Heart right ventricle (tissue), 16 donors: ENCODE measurements at regions of chr5 and their contacts with region 1.

Region 1: DNA sequence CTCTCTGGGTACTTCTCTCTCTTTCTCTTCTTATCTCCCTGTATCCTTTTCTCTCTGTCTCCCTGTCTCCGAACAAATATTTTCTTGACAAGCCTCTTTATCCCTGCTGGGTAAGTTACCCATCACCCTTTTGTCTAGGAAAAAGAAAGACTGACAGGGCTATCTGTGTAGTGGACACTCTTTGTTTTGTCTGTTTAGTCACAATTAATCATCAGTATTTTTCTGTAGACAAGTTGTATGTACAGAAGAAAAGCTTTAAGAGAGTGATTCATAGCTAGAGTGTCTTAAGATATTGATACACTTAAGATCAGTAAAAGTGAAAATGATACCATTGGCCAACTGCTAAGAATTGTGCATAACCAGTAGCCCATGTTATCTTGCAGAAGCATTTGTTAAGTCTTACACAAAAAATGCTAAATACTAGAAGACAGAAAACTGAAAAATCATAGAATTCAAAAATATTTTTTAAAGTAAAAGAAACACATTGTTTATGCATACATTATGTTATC is 1043.8 kb upstream of the EDIL3 start:
- DNase-seq: no peak
- ATAC-seq: no peak
- H3K4me3 ChIP-seq: no peak overlapping the region
- H3K27ac ChIP-seq: no peak overlapping the region
- H3K4me1 ChIP-seq: no peaks in the 10 kb centered on the region
- H3K27me3 ChIP-seq: no peaks in the 10 kb centered on the region
- CTCF ChIP-seq: no peak

Region 2: GRCh38 chr5:85357309-85357708 is 71.2 kb before region 1 on chr5:
- intact Hi-C with region 1: no loop called
- DNase-seq: no peak
- ATAC-seq: no peak
- H3K4me3 ChIP-seq: no peak overlapping the region
- H3K27ac ChIP-seq: no peak overlapping the region
- H3K4me1 ChIP-seq: no peaks in the 10 kb centered on the region
- H3K27me3 ChIP-seq: no peaks in the 10 kb centered on the region
- CTCF ChIP-seq: no peak

Region 3: DNA sequence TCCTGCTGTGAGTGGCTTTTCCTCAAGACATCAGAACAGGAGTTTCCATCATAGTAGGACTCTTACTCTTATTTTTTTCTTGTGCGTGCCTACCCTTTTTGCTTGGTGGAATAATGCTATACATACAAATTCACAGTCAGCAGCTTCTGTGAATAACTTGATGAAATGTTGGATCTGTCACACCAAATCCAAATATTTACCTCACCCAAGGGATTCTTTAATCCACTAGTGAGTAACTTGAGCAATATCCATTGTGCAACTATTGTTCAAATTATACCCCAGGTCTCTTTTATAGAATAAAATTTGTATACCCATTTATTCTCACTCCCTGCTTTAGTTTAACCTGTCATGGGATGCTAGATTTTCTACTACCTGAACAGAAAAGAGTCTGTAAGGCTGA is 34.5 kb after region 1 on chr5:
- intact Hi-C with region 1: no loop called
- DNase-seq: no peak
- ATAC-seq: no peak
- H3K4me3 ChIP-seq: no peak overlapping the region
- H3K27ac ChIP-seq: no peak overlapping the region
- H3K4me1 ChIP-seq: no peaks in the 10 kb centered on the region
- H3K27me3 ChIP-seq: no peaks in the 10 kb centered on the region
- CTCF ChIP-seq: no peak

Region 4: DNA sequence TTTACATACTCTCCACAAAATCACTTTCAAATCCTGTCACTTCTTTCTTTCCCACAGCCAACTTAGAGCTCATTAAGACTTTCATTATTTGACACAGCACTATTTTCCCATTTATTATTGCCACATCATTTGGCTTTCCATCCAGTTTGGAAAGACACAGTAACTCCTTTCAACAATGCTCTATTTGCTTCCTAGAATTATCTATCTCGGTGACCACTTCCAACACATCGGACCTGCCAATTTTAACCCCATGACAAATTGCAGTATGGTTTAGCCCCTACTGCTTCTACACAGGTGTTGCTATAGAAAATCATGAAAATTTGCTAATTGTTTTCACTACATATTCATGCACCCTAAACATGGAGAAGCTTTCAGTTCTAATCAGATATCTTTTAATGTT is 998.7 kb after region 1 on chr5:
- intact Hi-C with region 1: loop called in 1 of 10 experiments (anchors 5 kb)
- DNase-seq: no peak
- ATAC-seq: peak in 1 of 8 donors; percentile 61
- H3K4me3 ChIP-seq: no peak overlapping the region
- H3K27ac ChIP-seq: no peak overlapping the region
- H3K4me1 ChIP-seq: no peaks in the 10 kb centered on the region
- H3K27me3 ChIP-seq: no peaks in the 10 kb centered on the region
- CTCF ChIP-seq: no peak